ENCODE measurements at regions of chr11 and their contacts with region 1.

Region 1: DNA sequence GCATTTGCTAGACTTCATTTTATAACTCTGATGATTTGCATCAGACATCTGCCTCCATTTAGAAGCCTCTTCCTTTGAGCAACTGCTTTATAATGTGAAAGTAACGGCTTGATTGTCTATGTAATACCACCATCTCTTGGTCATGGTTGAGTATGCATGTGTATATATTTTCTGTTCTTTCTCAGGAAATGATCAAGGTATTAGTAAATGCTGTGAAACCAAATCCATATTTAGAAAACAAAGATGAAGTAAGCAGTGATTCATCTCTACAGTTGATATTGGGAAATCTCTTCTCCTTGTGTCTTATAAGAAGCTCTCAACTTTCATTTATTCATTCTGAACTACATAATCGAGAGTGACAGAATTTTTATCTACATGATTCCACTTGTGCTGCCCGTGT is 104.6 kb upstream of the ANO3 start:
- DNase-seq: peak in 1 of 5 donors; percentile 63
- H3K4me3 ChIP-seq: no peak overlapping the region
- H3K27ac ChIP-seq: no peak overlapping the region
- H3K4me1 ChIP-seq: no peaks in the 10 kb centered on the region
- H3K27me3 ChIP-seq: no peaks in the 10 kb centered on the region
- CTCF ChIP-seq: peak; percentile 45

Region 2: GRCh38 chr11:25981998-25982397 is 245.3 kb before region 1 on chr11:
- intact Hi-C with region 1: loop called (anchors 10 kb)
- DNase-seq: peak in 3 of 5 donors; percentile 41 to 92 (median 86)
- H3K4me3 ChIP-seq: peak overlapping the region in 2 of 3 donors; percentile 19 to 37
- H3K27ac ChIP-seq: no peak overlapping the region
- H3K4me1 ChIP-seq: no peaks in the 10 kb centered on the region
- H3K27me3 ChIP-seq: no peaks in the 10 kb centered on the region
- CTCF ChIP-seq: peak; percentile 57